Activated B cell treated with CpG ODN at 0.5 μM for 24 hours (primary cell): ENCODE measurements at regions of chr16 and their contacts with region 1.

Region 1: DNA sequence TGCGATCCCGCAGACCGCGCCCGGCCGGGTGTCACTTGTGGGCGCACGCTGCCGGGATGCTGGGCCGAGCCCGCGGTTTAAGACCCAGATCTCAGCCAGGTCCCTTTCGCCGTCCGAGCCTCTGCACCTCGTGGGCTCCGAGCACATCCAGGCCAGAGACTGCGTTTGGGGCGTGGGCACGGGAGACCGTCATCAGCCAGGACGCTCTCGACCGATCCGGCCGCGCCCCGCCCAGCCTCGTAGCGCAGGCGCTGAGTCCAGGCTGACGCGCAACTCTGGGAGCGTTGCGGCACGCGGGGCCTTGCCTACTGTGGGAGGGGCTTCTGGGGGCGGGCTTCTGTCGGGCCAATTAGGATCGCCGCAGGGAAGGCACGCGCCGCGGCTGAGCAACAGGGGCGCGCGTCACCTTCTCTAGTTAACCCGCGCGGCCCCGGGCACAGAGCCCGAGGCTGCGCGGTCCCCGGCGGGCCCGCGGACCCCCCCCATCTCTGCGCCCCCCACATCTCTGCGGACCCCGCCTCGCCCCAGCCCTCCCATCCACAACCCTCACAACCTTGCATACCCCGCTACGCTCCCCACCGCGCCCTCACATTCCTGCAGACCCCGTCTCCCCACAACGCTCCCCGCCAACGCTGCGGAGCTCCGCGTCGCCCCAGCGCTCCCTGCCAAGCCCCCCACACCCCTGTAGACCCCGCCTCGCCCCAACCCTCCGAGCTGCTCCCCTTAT is 722 bp upstream of the CEMP1 start:
- DNase-seq: peak; percentile 97
- ATAC-seq: peak; percentile 94
- H3K4me3 Mint-ChIP-seq: peak overlapping the region; percentile 97
- H3K27ac Mint-ChIP-seq: peak overlapping the region; percentile 96
- H3K4me1 Mint-ChIP-seq: peaks cover 23% of the 10 kb centered on the region
- H3K27me3 Mint-ChIP-seq: no peaks in the 10 kb centered on the region
- CTCF ChIP-seq: no peak

Region 2: GRCh38 chr16:2388875-2389433 is 143.0 kb before region 1 on chr16:
- CTCF ChIA-PET with region 1: no interaction called
- POLR2A ChIA-PET with region 1: no interaction called
- intact Hi-C with region 1: no loop called
- DNase-seq: no peak
- ATAC-seq: no peak
- H3K4me3 Mint-ChIP-seq: no peak overlapping the region
- H3K27ac Mint-ChIP-seq: no peak overlapping the region
- H3K4me1 Mint-ChIP-seq: no peaks in the 10 kb centered on the region
- H3K27me3 Mint-ChIP-seq: peaks cover 17% of the 10 kb centered on the region
- CTCF ChIP-seq: no peak

Region 3: DNA sequence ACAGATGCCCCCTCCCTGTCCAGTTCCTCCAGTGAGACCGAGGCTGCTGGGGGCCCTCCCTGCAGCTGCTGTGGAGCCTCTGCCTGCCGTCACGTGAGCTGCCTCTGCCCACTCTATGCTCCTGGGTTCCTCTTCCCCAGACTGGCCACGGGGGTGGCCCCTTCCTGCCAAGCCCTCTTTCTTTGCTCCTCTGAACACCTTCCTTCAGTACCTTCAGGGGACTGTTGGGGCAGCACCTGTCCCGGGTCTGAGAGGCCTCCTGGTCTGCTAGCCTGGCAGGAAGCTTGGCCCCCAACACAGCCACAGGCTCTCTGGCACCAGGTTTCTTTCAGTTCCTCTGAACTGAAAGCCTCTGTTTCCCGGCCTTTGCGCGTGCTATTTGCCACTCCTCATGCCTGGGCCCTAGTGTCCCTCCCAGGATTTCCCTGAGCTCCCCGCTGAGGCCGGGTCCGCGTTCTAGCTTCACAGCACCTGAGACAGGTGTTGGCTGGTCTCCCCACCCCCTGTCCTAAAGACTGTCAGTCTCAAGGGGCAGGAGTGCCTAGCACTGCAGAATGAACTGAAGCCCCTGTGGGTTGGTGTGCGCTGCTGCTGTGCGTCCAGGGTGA is 24.8 kb before region 1 on chr16:
- CTCF ChIA-PET with region 1: no interaction called
- POLR2A ChIA-PET with region 1: interaction called, 16 read pairs
- intact Hi-C with region 1: no loop called
- DNase-seq: peak; percentile 51
- ATAC-seq: peak; percentile 89
- H3K4me3 Mint-ChIP-seq: peak overlapping the region; percentile 33
- H3K27ac Mint-ChIP-seq: peak overlapping the region; percentile 89
- H3K4me1 Mint-ChIP-seq: peaks cover 62% of the 10 kb centered on the region
- H3K27me3 Mint-ChIP-seq: no peaks in the 10 kb centered on the region
- CTCF ChIP-seq: no peak

Region 4: DNA sequence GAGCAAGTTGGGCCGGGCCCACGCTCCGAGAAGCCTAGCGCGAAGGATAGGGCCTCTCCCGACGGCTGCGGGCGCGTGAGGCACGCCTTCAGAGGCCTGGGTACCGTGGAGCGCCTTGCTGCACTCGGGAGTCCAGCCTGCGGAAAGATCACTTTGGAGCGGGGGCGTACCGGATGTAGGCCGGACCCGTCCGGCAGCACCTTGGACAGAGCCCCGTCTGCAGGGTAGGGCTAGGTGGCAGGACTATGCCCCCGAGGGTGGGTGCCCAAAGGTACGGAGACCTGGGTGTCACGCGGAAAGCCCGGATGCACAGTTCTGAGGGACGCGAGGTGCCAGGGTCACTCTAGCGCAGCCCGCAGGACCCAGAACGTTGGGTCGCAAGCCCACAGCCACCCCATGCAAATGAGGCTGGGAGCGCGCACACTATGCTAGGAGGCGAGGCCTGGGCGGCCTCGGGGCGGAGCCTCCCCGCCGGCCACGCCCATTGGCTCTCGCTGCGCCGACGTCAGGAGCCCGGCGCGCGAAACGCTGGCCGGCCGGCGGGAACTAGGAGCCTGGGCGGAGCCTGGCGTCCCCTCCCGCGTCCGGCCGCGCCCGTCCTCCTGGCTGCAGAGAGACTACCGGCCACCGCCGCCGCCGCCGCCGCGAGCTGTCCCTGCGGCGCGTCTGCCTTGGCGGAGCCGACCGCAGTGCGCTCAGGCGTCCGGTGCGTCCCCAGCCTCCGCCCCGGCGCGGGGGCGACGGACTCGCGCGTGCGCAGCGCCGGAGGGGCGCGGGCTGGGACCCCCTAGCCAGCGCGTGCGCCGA is 437.0 kb after region 1 on chr16 and contains the start of gene PAQR4:
- CTCF ChIA-PET with region 1: no interaction called
- POLR2A ChIA-PET with region 1: no interaction called
- intact Hi-C with region 1: no loop called
- DNase-seq: peak; percentile 86
- ATAC-seq: peak; percentile 80
- H3K4me3 Mint-ChIP-seq: peak within 1 kb of the TSS; percentile 77
- H3K27ac Mint-ChIP-seq: peak within 1 kb of the TSS; percentile 18
- H3K4me1 Mint-ChIP-seq: peaks cover 24% of the 10 kb centered on the region
- H3K27me3 Mint-ChIP-seq: peaks cover 12% of the 10 kb centered on the region
- CTCF ChIP-seq: no peak
- total RNA-seq, gene PAQR4: 2.4 and 2.7 TPM in 2 replicates